Caco-2 (cell line): ENCODE measurements at regions of chr11 and their contacts with region 1.

Region 1: GRCh38 chr11:75388386-75389275 is 10.7 kb upstream of the RPS3 start:
- DNase-seq: peak; percentile 86 to 87
- H3K4me3 ChIP-seq: no peak overlapping the region
- H3K4me3 Mint-ChIP-seq: no peak overlapping the region
- H3K27ac Mint-ChIP-seq: no peak overlapping the region
- H3K4me1 ChIP-seq: peaks cover 46% of the 10 kb centered on the region
- H3K4me1 Mint-ChIP-seq: peaks cover 10% of the 10 kb centered on the region
- H3K27me3 ChIP-seq: no peaks in the 10 kb centered on the region
- H3K27me3 Mint-ChIP-seq: no peaks in the 10 kb centered on the region
- CTCF ChIP-seq: peak; percentile 92 to 98

Region 2: DNA sequence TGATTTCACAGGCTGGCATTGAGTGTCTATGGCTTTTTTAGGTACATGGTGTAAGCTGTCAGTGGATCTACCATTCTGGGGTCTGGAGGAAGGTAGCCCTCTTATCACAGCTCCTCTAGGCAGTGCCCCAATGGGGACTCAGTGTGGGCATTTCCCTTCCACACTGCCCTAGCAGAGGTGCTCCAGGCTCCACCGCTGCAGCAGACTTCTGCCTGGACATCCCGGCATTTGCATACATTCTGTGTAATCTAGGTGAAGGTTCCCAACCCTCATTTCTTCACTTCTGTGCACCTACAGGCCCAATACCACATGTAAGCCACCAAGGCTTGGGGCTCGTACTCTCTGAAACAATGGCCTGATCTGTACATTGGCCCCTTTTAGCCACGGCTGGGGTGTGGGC is 561.7 kb before region 1 on chr11:
- CTCF ChIA-PET with region 1: no interaction called
- POLR2A ChIA-PET with region 1: no interaction called
- intact Hi-C with region 1: no loop called
- DNase-seq: peak in 1 of 2 experiments; percentile 43
- H3K4me3 ChIP-seq: no peak overlapping the region
- H3K4me3 Mint-ChIP-seq: no peak overlapping the region
- H3K27ac Mint-ChIP-seq: no peak overlapping the region
- H3K4me1 ChIP-seq: no peaks in the 10 kb centered on the region
- H3K4me1 Mint-ChIP-seq: no peaks in the 10 kb centered on the region
- H3K27me3 ChIP-seq: no peaks in the 10 kb centered on the region
- H3K27me3 Mint-ChIP-seq: no peaks in the 10 kb centered on the region
- CTCF ChIP-seq: no peak

Region 3: DNA sequence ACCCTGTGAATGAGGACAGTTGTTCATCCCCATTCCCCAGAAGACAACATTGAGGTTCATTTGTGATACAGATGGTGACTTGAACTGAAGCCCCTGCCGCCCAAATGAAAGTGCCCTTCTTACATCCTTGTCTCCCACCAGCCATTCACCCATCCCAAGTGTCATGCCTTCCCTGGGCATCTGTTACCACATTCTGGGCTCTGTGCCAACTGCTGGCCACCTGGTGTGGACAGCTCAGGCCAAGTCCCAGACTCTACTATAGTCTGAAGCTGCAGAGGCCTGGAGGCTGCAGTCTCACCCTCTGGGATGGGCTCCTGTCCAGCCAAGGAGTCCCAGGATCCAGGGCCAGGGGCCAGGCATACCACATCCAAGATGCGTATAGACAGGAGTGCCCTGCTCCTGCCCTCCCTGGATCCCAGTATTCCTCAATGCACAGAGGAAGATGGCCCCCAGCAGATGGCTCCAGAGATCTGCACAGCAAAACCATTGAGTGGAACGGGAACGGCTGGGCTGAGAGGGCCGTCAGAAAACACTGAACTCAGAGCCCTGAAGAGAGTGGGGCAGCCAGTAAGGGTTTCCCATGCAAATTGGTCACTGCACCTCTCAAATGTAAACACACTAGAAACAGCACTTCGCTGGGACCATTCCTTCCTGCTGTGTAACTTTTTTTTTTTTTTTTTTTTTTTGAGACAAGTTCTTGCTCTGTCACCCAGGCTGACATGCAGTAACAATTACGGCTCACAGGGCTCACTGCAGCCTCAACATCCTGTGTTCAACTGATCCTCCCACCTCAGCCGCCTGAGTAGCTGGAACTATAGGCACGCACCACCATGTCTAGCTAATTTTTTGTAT is 60.0 kb before region 1 on chr11:
- CTCF ChIA-PET with region 1: interaction called, 10 read pairs
- POLR2A ChIA-PET with region 1: interaction called, 6 read pairs
- intact Hi-C with region 1: loop called (anchors 1 kb)
- DNase-seq: peak; percentile 91 to 92
- H3K4me3 ChIP-seq: no peak overlapping the region
- H3K4me3 Mint-ChIP-seq: no peak overlapping the region
- H3K27ac Mint-ChIP-seq: peak overlapping the region; percentile 8
- H3K4me1 ChIP-seq: peaks cover 41% of the 10 kb centered on the region
- H3K4me1 Mint-ChIP-seq: peaks cover 64% of the 10 kb centered on the region
- H3K27me3 ChIP-seq: no peaks in the 10 kb centered on the region
- H3K27me3 Mint-ChIP-seq: no peaks in the 10 kb centered on the region
- CTCF ChIP-seq: peak; percentile 90 to 98

Region 4: DNA sequence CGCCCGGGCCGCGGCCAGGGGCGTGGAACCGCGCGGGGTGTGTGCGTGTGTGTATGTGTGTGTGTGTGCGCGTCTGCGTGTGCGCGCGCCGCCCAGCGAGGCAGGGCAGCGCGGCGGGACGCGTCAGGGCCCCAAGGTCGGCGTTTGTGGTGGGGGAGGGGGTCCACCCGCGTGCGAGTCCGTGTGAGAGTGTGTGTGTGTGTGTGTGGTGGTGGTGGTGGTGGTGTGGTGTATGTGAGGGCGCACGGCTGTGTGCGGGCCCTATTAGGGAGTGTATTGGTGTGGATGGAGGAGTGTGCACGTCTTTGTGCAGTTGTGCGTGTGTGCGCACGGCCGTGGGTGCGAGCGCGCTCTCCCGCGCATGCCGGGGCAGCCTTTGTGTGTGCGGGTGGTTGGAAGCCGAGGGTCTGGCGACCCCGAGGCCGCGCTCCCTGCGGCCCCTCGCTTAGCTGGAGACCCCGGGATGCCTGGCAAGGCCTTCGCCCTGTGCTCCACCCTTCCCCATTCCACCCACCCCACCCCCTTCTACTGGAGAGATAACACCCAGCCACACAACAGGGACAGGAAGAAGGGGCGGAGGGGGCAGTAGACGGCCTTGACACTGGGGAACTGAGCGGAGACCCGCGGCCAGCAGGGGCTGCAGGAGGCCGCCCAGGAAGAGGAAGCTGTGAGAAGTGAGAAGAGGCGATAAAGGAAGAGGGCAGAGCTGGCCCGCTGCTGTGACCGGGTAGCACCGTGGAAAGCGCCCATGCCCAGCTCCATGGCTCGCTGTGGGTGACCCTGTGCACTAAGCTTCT is 36.6 kb before region 1 on chr11:
- CTCF ChIA-PET with region 1: interaction called, 35 read pairs
- POLR2A ChIA-PET with region 1: interaction called, 5 read pairs
- intact Hi-C with region 1: loop called (anchors 1 kb)
- DNase-seq: peak; percentile 87 to 89
- H3K4me3 ChIP-seq: peak overlapping the region; percentile 56
- H3K4me3 Mint-ChIP-seq: peak overlapping the region; percentile 99
- H3K27ac Mint-ChIP-seq: peak overlapping the region; percentile 98
- H3K4me1 ChIP-seq: peaks cover 49% of the 10 kb centered on the region
- H3K4me1 Mint-ChIP-seq: peaks cover 47% of the 10 kb centered on the region
- H3K27me3 ChIP-seq: no peaks in the 10 kb centered on the region
- H3K27me3 Mint-ChIP-seq: no peaks in the 10 kb centered on the region
- CTCF ChIP-seq: peak; percentile 60 to 82

Region 5: DNA sequence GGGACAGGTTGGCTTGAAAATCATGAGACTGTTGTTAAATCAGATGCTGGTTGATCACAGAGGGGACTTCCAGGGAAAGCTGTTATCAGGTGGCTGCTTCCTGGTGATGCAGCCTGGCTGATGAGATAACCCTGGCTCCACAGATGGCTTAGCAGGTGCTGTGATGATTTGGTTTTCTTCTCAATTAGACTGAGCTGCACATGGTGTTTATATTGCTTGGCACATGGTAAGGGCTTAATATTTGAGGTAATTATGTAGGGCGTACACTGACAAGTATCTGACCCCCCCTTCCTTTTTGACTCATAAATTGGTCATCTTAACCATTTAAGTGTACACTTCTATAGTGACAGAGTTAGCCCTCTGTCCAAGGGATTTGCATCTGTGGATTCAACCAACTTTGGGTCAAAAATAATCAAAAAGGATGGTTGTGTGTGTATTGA is 17.7 kb after region 1 on chr11:
- CTCF ChIA-PET with region 1: interaction called, 11 read pairs
- POLR2A ChIA-PET with region 1: interaction called, 5 read pairs
- intact Hi-C with region 1: no loop called
- DNase-seq: no peak
- H3K4me3 ChIP-seq: no peak overlapping the region
- H3K4me3 Mint-ChIP-seq: no peak overlapping the region
- H3K27ac Mint-ChIP-seq: no peak overlapping the region
- H3K4me1 ChIP-seq: peaks cover 24% of the 10 kb centered on the region
- H3K4me1 Mint-ChIP-seq: peaks cover 42% of the 10 kb centered on the region
- H3K27me3 ChIP-seq: no peaks in the 10 kb centered on the region
- H3K27me3 Mint-ChIP-seq: no peaks in the 10 kb centered on the region
- CTCF ChIP-seq: no peak

Region 6: GRCh38 chr11:75429902-75430719 is 41.5 kb after region 1 on chr11:
- CTCF ChIA-PET with region 1: interaction called, 11 read pairs
- POLR2A ChIA-PET with region 1: interaction called, 4 read pairs
- intact Hi-C with region 1: loop called (anchors 2 kb)
- DNase-seq: peak; percentile 95 to 98
- H3K4me3 ChIP-seq: peak overlapping the region; percentile 71
- H3K4me3 Mint-ChIP-seq: peak overlapping the region; percentile 84
- H3K27ac Mint-ChIP-seq: peak overlapping the region; percentile 90
- H3K4me1 ChIP-seq: peaks cover 14% of the 10 kb centered on the region
- H3K4me1 Mint-ChIP-seq: peaks cover 9% of the 10 kb centered on the region
- H3K27me3 ChIP-seq: no peaks in the 10 kb centered on the region
- H3K27me3 Mint-ChIP-seq: no peaks in the 10 kb centered on the region
- CTCF ChIP-seq: peak in 1 of 2 experiments; percentile 20

Region 7: DNA sequence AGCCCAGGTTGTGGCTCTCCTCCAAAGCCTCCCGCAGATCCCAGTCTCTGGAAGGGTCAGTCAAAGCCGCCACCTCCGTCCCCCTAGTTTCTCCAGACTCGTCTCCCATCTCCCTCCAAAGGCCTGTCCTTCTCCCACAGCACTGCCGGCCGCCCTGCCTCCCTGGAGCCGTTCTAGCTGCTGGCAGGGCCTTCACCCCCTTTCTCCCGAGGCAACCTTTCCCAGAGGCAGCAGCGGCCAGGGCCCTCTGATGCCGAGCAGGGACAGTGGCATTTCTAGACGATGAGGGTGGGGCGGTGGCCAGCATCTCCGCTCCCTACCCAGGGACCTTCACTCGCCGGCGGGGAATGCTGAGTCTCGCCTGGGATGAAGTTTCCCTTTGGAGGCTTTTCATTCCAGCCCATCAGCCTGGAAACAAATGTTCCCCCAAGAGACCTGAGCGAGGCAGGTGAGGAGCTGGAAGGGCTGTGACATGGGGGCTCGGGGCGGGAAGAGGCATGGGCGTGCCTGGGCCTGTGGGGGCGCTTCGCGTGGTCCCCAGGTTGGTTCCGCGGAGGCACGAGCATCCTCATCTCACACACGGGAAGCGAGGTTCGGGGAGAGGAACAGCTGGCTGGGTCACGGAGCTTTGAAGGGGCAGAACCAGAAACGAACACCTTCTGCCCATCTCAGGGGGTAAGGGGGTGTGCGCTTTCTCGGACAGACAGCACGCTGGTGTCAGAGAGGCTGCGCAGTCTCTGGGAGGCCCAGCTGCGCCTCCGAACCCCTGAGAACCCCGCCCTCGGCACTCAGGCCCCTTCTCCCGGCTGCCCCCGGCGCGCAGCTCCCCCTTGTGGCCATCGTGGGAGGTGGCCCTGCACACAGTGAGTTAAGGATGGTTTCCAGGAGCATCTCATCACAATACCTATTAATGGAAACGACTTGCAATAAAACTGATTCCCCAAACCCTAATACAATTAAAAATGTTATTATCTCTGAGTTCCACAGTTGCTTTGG is 62.5 kb after region 1 on chr11:
- CTCF ChIA-PET with region 1: interaction called, 14 read pairs
- POLR2A ChIA-PET with region 1: no interaction called
- intact Hi-C with region 1: no loop called
- DNase-seq: peak in 1 of 2 experiments; percentile 79
- H3K4me3 ChIP-seq: no peak overlapping the region
- H3K4me3 Mint-ChIP-seq: no peak overlapping the region
- H3K27ac Mint-ChIP-seq: no peak overlapping the region
- H3K4me1 ChIP-seq: no peaks in the 10 kb centered on the region
- H3K4me1 Mint-ChIP-seq: no peaks in the 10 kb centered on the region
- H3K27me3 ChIP-seq: no peaks in the 10 kb centered on the region
- H3K27me3 Mint-ChIP-seq: no peaks in the 10 kb centered on the region
- CTCF ChIP-seq: peak; percentile 93 to 98